Sciatic nerve (tissue), 2 donors: ENCODE measurements at regions of chr2 and their contacts with region 1.

Region 1: GRCh38 chr2:227322530-227323205 is 2.4 kb upstream of the MFF start:
- DNase-seq: no peak
- ATAC-seq: no peak

Region 2: DNA sequence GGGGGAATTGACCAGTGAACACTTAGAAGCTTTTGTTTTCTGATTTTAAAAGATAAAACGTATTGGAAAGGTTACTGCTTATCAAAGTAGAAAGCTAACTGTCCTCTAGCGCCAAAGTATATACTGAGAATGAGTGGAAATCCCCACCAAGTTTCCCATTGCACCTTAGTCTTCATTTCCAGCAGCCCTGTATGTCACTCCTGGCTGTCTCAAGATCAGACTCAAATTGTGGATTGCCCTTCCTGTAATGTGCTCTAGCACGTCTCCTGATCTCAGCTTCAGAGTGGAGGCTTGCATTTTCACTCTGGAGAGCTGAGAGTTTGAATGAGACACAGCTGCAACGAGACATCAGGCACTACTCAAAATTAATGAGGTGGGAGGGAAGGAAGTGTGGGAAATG is 29.0 kb after region 1 on chr2:
- intact Hi-C with region 1: loop called (anchors 2 kb)
- DNase-seq: no peak
- ATAC-seq: no peak